ENCODE measurements at regions of chr17 and their contacts with region 1.

Region 1: DNA sequence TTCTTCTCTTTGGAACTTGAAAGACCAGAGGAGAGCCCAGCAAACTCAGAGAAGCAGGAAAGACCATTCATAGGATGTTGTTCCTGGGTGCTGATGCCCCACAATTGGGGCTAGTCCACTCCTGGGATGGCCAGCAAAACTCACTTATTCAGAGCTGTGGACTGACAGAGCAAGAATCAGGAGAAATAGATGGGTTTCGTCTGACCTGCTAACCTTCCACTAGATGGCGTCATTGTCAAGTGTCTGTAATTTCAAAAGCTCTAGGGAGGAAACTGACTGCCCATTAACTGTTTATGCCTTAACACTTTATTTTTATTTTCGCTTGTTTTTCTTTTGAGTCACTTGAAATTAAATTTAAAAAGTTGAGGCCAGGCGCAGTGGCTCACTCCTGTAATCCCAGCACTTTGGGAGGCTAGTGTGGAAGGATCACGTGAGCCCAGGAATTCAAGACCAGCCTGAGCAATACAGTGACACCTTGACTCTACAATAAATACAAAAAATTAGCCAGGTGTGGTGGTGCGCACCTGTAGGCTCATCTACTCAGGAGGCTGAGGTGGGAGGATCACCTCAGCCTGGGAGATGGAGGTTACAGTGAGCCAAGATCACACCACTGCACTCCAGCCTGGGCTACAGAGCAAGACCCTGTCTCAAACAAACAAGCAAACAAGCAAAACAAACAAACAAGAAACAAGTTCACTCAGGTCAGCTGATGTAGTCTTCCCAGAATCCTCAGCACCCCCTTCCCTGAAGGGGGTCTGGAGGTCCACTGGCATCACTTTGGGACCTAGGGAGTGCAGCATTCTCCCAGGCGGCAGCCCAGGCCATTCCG is 28.6 kb upstream of the MILR1 start:
- DNase-seq: no peak
- H3K4me3 ChIP-seq: no peak overlapping the region
- H3K27ac ChIP-seq: no peak overlapping the region
- H3K4me1 ChIP-seq: peaks cover 0 to 27% (median 12%) of the 10 kb centered on the region in 6 donors
- H3K27me3 ChIP-seq: no peaks in the 10 kb centered on the region
- CTCF ChIP-seq: peak; percentile 59 to 89 (median 83)
- POLR2A ChIP-seq: no peak

Region 2: GRCh38 chr17:64320613-64321553 is 99.5 kb before region 1 on chr17:
- intact Hi-C with region 1: loop called (anchors 5 kb)
- DNase-seq: no peak
- H3K4me3 ChIP-seq: no peak overlapping the region
- H3K27ac ChIP-seq: peak overlapping the region in 4 of 8 donors; percentile 15 to 96 (median 52)
- H3K4me1 ChIP-seq: peaks cover 4 to 96% (median 63%) of the 10 kb centered on the region in 6 donors
- H3K27me3 ChIP-seq: no peaks in the 10 kb centered on the region
- CTCF ChIP-seq: peak; percentile 60 to 88 (median 81)
- POLR2A ChIP-seq: no peak

Region 3: DNA sequence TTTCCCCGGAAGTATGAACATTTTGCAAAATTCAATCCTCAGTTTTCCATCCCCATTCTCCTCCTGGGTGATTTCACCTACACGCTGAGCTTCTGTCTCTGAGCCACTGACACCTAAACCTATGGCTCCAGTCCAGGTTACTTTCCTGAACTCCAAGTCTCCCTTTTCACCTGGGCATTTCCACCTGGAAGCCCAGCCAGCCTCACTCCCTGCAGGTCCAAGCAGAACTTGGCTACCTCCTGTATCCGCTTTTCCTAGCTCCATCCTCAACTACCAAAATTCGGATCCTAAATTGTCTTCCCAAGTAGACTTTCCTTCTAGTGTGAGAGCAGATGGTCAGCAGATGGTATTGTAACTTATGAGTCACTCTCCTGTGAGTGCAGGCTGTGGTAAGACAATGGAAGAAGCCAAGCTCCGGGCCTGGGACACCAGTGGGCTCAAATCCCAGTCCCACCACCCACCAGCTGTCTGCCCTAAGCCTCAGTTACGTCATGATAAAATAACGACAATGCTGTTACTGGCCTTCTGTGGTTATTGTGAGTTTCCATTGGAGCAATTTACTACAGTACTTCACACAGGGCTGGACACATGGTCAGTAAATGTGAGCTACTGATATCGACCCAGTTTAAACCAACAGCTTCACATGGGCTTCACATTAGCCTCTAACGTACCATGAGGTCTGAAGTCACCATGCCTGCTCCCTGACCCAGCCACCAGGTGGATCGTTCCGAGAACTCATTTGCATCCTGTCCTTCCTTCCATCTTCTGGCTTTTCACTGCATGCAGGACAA is 63.0 kb before region 1 on chr17:
- intact Hi-C with region 1: no loop called
- DNase-seq: no peak
- H3K4me3 ChIP-seq: no peak overlapping the region
- H3K27ac ChIP-seq: peak overlapping the region in 3 of 8 donors; percentile 41 to 65 (median 64)
- H3K4me1 ChIP-seq: peaks cover 4 to 67% (median 22%) of the 10 kb centered on the region in 6 donors
- H3K27me3 ChIP-seq: no peaks in the 10 kb centered on the region
- CTCF ChIP-seq: no peak
- POLR2A ChIP-seq: no peak

Region 4: GRCh38 chr17:64496786-64497564 is 76.6 kb after region 1 on chr17 and contains the start of gene POLG2:
- intact Hi-C with region 1: loop called (anchors 5 kb)
- DNase-seq: peak; percentile 98
- H3K4me3 ChIP-seq: peak within 1 kb of the TSS; percentile 57 to 92 (median 78)
- H3K27ac ChIP-seq: peak within 1 kb of the TSS; percentile 77 to 94 (median 90)
- H3K4me1 ChIP-seq: peaks cover 25 to 98% (median 78%) of the 10 kb centered on the region in 6 donors
- H3K27me3 ChIP-seq: no peaks in the 10 kb centered on the region
- CTCF ChIP-seq: peak in 10 of 11 experiments; percentile 19 to 61 (median 40)
- POLR2A ChIP-seq: peak in 1 of 3 donors; percentile 11
- total RNA-seq, gene POLG2: 15.9 to 35.3 (median 24.1) TPM

Region 5: DNA sequence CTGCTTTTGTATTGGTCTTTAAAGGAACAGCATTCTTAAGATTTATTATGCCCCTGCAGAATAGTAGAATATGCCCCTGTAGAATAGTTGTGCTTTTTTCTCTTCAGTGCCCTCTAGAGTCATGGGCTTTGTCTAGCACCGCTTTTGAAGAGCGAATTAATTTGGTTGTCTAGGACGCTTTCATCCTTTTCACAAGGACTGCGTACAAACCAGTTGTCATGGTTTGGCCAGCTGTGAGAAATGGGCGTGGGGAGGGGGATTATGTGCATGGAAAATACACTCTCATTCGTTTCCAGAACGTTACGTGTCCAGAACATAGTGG is 87.1 kb after region 1 on chr17:
- intact Hi-C with region 1: no loop called
- DNase-seq: no peak
- H3K4me3 ChIP-seq: peak overlapping the region; percentile 70 to 96 (median 86)
- H3K27ac ChIP-seq: peak overlapping the region; percentile 99 to 100 (median 100)
- H3K4me1 ChIP-seq: peaks cover 40 to 68% (median 52%) of the 10 kb centered on the region in 6 donors
- H3K27me3 ChIP-seq: no peaks in the 10 kb centered on the region
- CTCF ChIP-seq: peak in 8 of 11 experiments; percentile 4 to 57 (median 40)
- POLR2A ChIP-seq: peak in 1 of 3 donors; percentile 17

Region 6: DNA sequence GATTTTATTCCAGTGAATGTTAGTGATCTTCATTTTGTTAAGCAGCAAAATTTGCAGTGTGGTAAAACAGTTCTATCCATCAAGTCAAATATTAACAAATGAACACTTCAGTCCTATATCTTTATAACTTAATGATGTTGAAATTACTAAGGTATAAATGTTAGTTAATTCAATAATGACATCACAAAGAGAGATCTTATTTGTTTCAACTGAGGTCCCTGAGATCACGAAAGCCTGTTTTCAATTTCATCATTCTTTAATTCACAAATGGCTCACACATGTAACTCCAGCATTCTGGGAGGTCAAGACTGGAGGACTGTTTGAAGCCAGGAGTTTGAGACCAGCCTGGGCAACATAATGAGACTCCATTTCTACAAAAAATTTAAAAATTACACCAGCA is 227.9 kb after region 1 on chr17:
- intact Hi-C with region 1: loop called (anchors 10 kb)
- DNase-seq: no peak
- H3K4me3 ChIP-seq: no peak overlapping the region
- H3K27ac ChIP-seq: no peak overlapping the region
- H3K4me1 ChIP-seq: peaks cover 10 to 87% (median 27%) of the 10 kb centered on the region in 6 donors
- H3K27me3 ChIP-seq: no peaks in the 10 kb centered on the region
- CTCF ChIP-seq: no peak
- POLR2A ChIP-seq: no peak

Measured in spleen (tissue), 13 donors.